Natural killer cell (primary cell): ENCODE measurements at regions of chr9 and their contacts with region 1.

Region 1: GRCh38 chr9:112333639-112334431 is 416 bp upstream of the PTBP3 start:
- DNase-seq: peak; percentile 87 to 98
- ATAC-seq: peak; percentile 85 to 96 (median 89)
- H3K4me3 ChIP-seq: peak overlapping the region; percentile 95
- H3K4me3 Mint-ChIP-seq: peak overlapping the region; percentile 89
- H3K27ac ChIP-seq: peak overlapping the region; percentile 97
- H3K27ac Mint-ChIP-seq: peak overlapping the region; percentile 89 to 90
- H3K4me1 ChIP-seq: peaks cover 4% of the 10 kb centered on the region
- H3K4me1 Mint-ChIP-seq: peaks cover 37% of the 10 kb centered on the region in 2 donors
- H3K27me3 ChIP-seq: no peaks in the 10 kb centered on the region
- H3K27me3 Mint-ChIP-seq: no peaks in the 10 kb centered on the region
- CTCF ChIP-seq: peak; percentile 40

Region 2: GRCh38 chr9:112097712-112098688 is 235.8 kb before region 1 on chr9:
- intact Hi-C with region 1: loop called (anchors 1 kb)
- DNase-seq: peak; percentile 47 to 89
- ATAC-seq: peak; percentile 87 to 94 (median 91)
- H3K4me3 ChIP-seq: no peak overlapping the region
- H3K4me3 Mint-ChIP-seq: no peak overlapping the region
- H3K27ac ChIP-seq: no peak overlapping the region
- H3K27ac Mint-ChIP-seq: peak overlapping the region; percentile 59 to 63
- H3K4me1 ChIP-seq: peaks cover 10% of the 10 kb centered on the region
- H3K4me1 Mint-ChIP-seq: peaks cover 30 to 34% of the 10 kb centered on the region in 2 donors
- H3K27me3 ChIP-seq: no peaks in the 10 kb centered on the region
- H3K27me3 Mint-ChIP-seq: no peaks in the 10 kb centered on the region
- CTCF ChIP-seq: peak; percentile 89

Region 3: DNA sequence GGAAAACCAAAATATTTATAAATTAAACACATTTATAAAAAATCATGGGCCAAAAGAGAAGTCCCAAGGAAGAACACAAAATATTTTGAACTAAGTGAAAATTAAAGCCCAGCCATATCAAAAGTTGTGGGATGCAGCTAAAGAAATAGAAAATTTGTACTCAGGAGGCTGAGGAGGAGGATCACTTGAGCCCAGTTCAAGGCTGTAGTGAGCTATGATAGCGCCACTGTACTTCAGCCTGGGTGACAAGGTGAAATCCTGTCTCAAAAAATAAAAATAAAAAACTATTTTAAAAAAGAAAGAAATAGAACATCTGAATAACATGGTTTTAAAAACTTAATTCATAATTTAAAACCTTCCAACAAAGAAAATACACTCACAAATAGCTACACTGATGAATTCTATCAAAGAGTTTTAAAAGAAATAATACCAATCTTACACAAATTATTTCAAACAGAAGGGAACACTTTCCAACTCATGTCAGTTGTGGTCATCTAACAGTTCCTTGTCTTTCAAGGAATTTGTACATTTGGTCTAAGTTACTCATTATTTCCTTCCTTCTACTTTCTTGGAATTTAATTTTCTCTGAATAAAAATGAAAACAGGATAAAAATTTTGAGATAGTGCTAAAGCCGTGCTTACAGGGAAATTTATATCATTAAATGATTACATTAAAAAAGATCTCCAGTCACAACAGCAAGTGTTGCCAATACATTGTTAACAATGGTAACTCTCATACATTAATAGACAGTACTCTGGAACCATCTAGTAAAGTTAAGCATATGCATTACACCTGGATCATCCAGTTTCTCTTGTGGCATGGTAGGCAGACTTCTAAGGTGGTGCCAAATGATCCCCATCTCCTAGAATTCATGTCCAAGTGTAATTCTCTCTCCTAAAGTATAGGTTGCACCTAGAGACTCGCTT is 18.2 kb before region 1 on chr9:
- intact Hi-C with region 1: loop called (anchors 2 kb)
- DNase-seq: no peak
- ATAC-seq: no peak
- H3K4me3 ChIP-seq: no peak overlapping the region
- H3K4me3 Mint-ChIP-seq: peak overlapping the region; percentile 58
- H3K27ac ChIP-seq: no peak overlapping the region
- H3K27ac Mint-ChIP-seq: peak overlapping the region; percentile 75 to 82
- H3K4me1 ChIP-seq: peaks cover 17% of the 10 kb centered on the region
- H3K4me1 Mint-ChIP-seq: peaks cover 66 to 78% of the 10 kb centered on the region in 2 donors
- H3K27me3 ChIP-seq: no peaks in the 10 kb centered on the region
- H3K27me3 Mint-ChIP-seq: no peaks in the 10 kb centered on the region
- CTCF ChIP-seq: no peak

Region 4: DNA sequence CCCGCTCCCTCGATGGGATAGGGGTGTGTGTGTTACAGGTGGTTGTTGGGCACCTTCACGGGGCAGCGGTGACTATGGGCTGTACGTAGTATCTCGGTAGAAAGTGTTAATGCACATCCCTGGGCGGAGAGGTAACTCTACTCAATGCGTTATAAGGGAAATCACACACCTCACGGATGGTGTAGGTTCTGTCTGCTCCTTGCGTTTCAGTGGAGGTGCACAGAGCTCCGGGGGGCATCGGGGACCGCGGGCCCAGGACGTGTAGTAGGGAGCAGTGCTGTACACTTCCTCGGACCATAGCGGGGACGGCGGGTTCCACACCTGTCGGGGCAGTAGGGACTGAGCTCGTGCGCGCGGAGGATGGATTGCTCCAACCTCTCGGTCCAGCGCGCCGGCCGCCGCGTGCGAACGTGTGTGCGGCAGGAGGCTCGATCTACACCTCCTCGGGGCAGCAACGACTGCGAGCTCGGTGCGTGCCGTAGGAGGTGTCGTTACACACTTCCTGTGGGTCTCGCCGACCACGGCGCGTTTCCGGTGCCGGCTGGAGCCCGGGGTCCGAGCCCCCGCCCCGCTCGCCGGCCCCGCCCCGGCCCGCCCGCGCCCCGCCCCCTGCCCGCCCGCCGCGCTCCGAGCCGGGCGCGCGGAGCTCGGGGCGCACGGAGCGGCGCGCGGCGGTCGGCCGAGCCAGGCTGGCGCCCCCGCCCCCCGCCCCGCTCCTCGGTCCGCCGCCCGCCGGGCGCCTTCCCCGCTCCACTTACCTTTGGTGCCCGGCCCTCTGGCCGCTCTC is 152.6 kb after region 1 on chr9 and contains the start of gene KIAA1958:
- intact Hi-C with region 1: loop called (anchors 2 kb)
- DNase-seq: peak; percentile 69 to 89
- ATAC-seq: peak; percentile 86 to 93 (median 93)
- H3K4me3 ChIP-seq: peak within 1 kb of the TSS; percentile 91
- H3K4me3 Mint-ChIP-seq: peak within 1 kb of the TSS; percentile 98
- H3K27ac ChIP-seq: peak within 1 kb of the TSS; percentile 75
- H3K27ac Mint-ChIP-seq: peak within 1 kb of the TSS; percentile 86 to 91
- H3K4me1 ChIP-seq: peaks cover 9% of the 10 kb centered on the region
- H3K4me1 Mint-ChIP-seq: peaks cover 19 to 20% of the 10 kb centered on the region in 2 donors
- H3K27me3 ChIP-seq: no peaks in the 10 kb centered on the region
- H3K27me3 Mint-ChIP-seq: no peaks in the 10 kb centered on the region
- CTCF ChIP-seq: no peak
- total RNA-seq, gene KIAA1958: 5.4 to 6.1 (median 5.5) TPM

Region 5: GRCh38 chr9:112750111-112750767 is 416.4 kb after region 1 on chr9 and contains the start of gene SNX30:
- intact Hi-C with region 1: loop called (anchors 5 kb)
- DNase-seq: peak; percentile 75 to 89
- ATAC-seq: peak; percentile 79 to 95 (median 89)
- H3K4me3 ChIP-seq: peak within 1 kb of the TSS; percentile 64
- H3K4me3 Mint-ChIP-seq: peak within 1 kb of the TSS; percentile 91
- H3K27ac ChIP-seq: peak within 1 kb of the TSS; percentile 78
- H3K27ac Mint-ChIP-seq: peak within 1 kb of the TSS; percentile 85 to 89
- H3K4me1 ChIP-seq: peaks cover 47% of the 10 kb centered on the region
- H3K4me1 Mint-ChIP-seq: peaks cover 53 to 59% of the 10 kb centered on the region in 2 donors
- H3K27me3 ChIP-seq: no peaks in the 10 kb centered on the region
- H3K27me3 Mint-ChIP-seq: no peaks in the 10 kb centered on the region
- CTCF ChIP-seq: no peak
- total RNA-seq, gene SNX30: 8.5 to 10.5 (median 9.3) TPM